ENCODE measurements at regions of chr7 and their contacts with region 1.

Region 1: GRCh38 chr7:127392566-127393367 is at the start of gene ZNF800:
- DNase-seq: peak; percentile 88
- H3K4me3 Mint-ChIP-seq: peak within 1 kb of the TSS; percentile 99
- H3K27ac Mint-ChIP-seq: peak within 1 kb of the TSS; percentile 98
- H3K4me1 Mint-ChIP-seq: peaks cover 56% of the 10 kb centered on the region
- H3K27me3 Mint-ChIP-seq: no peaks in the 10 kb centered on the region
- total RNA-seq, gene ZNF800: 37.2 to 38.0 TPM

Region 2: GRCh38 chr7:127347567-127348246 is 45.1 kb before region 1 on chr7:
- CTCF ChIA-PET with region 1: interaction called, 16 read pairs
- POLR2A ChIA-PET with region 1: interaction called, 26 read pairs
- DNase-seq: peak; percentile 73
- H3K4me3 Mint-ChIP-seq: peak overlapping the region; percentile 33
- H3K27ac Mint-ChIP-seq: no peak overlapping the region
- H3K4me1 Mint-ChIP-seq: peaks cover 6% of the 10 kb centered on the region
- H3K27me3 Mint-ChIP-seq: peaks cover 17% of the 10 kb centered on the region

Region 3: DNA sequence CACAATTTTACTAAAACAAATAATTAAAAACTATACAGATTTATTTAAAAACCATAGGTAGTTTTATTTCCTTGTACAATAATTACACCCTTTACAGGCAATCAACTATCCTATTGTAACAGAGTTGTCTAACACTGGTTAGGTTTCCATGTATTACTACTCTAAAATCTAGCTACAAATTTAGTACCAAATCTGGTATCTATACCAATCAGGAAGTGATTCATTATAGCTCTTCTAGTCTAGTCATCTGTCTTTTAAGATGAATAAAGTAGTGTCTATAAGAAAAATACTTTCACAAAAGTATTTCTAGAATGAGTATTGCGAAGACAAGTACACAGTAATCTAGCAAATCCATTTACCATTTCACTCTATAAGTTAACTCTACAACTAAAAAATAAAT is 17.1 kb before region 1 on chr7:
- CTCF ChIA-PET with region 1: interaction called, 3 read pairs
- POLR2A ChIA-PET with region 1: interaction called, 21 read pairs
- DNase-seq: no peak
- H3K4me3 Mint-ChIP-seq: no peak overlapping the region
- H3K27ac Mint-ChIP-seq: no peak overlapping the region
- H3K4me1 Mint-ChIP-seq: peaks cover 37% of the 10 kb centered on the region
- H3K27me3 Mint-ChIP-seq: no peaks in the 10 kb centered on the region

Region 4: GRCh38 chr7:127413962-127414361 is 21.2 kb after region 1 on chr7:
- CTCF ChIA-PET with region 1: interaction called, 6 read pairs
- POLR2A ChIA-PET with region 1: interaction called, 48 read pairs
- DNase-seq: no peak
- H3K4me3 Mint-ChIP-seq: peak overlapping the region; percentile 8
- H3K27ac Mint-ChIP-seq: peak overlapping the region; percentile 81
- H3K4me1 Mint-ChIP-seq: peaks cover 33% of the 10 kb centered on the region
- H3K27me3 Mint-ChIP-seq: peaks cover 14% of the 10 kb centered on the region

Region 5: DNA sequence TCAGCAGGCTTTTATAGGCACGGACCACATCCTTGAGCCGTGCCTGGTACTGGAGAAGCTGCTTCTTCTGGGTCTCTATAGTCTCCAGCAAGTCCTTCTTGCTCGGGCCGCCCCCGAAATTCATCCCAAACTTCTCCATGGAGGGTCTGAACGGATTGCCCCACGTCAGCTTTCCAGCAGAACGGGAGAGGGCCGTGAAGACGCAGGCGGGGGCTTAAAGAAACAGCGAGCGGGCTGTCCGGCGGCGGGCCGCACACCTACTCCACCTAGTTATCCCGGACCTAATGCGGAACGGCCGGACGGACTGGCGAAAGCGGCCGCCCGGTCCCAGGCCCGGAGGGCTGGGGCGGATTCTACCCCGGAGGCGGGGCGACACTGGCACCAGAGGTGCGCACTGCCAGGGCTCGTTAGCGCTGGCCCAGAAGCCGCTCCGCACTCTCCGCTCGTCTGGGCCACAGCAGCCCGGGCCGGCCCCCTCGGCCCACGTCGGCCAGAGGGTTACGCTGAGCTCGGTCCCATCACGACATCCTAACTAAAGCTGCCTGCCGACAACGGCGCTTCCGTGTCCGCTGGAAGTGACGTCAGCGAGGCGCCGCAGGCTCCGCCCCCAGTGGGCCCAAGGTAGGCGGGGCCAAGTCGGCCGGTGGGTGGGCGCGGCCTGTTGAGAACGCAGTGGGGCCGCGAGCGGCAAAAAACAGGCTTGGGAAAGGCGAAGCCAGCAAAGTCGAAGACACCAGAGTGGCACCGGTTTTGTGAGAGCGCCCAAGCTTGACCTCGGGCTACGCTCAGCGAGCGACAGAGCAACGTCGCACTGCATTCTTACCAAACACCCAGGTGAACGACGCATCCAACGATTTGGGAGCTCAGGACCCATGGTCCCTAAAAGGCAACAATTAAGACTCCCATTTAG is 192.5 kb after region 1 on chr7 and contains the start of gene GCC1:
- CTCF ChIA-PET with region 1: no interaction called
- POLR2A ChIA-PET with region 1: interaction called, 35 read pairs
- DNase-seq: peak; percentile 95
- H3K4me3 Mint-ChIP-seq: peak within 1 kb of the TSS; percentile 92
- H3K27ac Mint-ChIP-seq: peak within 1 kb of the TSS; percentile 82
- H3K4me1 Mint-ChIP-seq: peaks cover 63% of the 10 kb centered on the region
- H3K27me3 Mint-ChIP-seq: no peaks in the 10 kb centered on the region
- total RNA-seq, gene GCC1: 22.0 to 22.4 TPM

Measured in activated CD4-positive, alpha-beta memory T cell treated with anti-CD3 and anti-CD28 coated beads, Interleukin-2, amount 10 ng/mL, durations not matched to agents 7 days and 5 days (primary cell).